ENCODE measurements at regions of chrX and their contacts with region 1.

Region 1: DNA sequence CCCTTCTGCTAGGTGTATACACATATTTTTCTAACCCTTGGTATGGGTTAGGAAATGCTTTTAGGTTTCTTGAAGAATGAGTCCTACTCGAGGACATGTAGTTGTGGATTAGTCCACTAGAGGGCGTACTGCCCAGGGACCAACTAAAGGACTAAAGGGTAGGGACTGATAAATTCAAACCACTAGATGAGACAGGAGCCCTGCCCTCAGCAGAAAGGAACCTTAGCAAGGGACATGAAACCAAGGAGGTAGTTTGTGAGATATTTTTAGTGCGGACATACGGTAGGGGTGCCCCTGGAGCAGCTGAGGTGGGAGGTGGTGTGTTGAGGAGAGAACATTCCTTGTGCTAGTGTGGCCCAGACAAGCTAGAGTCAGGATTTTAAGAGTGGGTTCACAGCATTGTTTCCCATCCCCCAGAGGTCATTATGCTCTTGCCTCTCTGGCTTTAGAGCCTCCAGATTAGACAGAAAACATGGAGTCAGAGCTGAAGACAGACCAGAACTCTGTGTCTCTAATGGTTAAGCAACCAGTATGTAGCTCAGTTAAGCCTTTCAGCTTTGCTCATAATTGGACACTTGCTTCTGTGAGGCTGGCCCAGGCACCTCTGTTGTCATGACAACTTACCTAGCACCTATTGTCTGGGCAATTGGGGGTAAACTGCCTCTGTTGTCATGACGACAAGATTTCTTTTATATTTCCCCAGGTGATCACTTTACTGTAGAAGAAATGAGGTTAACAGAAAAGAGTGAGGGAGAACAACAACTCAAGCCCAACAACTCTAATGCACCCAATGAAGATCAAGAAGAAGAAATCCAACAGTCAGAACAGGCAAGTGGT is 1.0 kb downstream of the TMEM31 start:
- DNase-seq: no peak
- H3K4me3 ChIP-seq: no peak overlapping the region
- H3K27ac ChIP-seq: no peak overlapping the region
- H3K4me1 ChIP-seq: peaks cover 0 to 4% (median 3%) of the 10 kb centered on the region in 4 donors
- H3K27me3 ChIP-seq: no peaks in the 10 kb centered on the region
- CTCF ChIP-seq: peak in 2 of 4 experiments; percentile 23 to 35
- EP300 ChIP-seq: no peak
- POLR2A ChIP-seq: no peak

Region 2: DNA sequence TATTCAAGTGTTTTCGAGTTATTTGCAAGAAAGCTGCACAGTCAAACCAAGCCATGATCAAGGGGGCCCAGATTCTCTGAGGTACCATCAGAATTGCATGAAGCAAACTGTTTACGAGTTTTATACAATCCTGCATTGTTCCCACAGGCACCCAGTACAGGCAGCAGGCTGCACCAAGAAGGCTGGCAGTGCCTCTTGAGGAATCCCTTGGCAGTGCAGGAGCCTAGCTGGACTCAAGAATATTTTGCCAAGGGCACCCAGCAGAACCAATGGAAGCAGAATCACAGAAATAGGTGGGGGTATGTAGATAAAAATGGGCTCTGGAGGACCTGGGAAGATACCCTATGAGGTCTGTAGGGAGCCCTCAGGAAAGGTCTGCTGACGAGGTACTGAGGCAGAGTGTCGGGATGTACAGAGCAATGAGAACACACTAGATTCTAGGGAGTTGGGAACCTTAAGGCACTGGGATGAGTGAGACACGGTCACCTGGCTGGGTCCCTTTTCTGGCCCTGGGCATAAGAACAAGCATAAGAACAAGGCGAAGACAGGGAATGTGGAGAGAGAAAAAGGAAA is 62.4 kb after region 1 on chrX:
- intact Hi-C with region 1: loop called (anchors 10 kb)
- DNase-seq: no peak
- H3K4me3 ChIP-seq: no peak overlapping the region
- H3K27ac ChIP-seq: no peak overlapping the region
- H3K4me1 ChIP-seq: peaks cover 0 to 5% (median 0%) of the 10 kb centered on the region in 4 donors
- H3K27me3 ChIP-seq: no peaks in the 10 kb centered on the region
- CTCF ChIP-seq: peak in 3 of 4 experiments; percentile 14 to 36 (median 25)
- EP300 ChIP-seq: no peak
- POLR2A ChIP-seq: no peak

Region 3: DNA sequence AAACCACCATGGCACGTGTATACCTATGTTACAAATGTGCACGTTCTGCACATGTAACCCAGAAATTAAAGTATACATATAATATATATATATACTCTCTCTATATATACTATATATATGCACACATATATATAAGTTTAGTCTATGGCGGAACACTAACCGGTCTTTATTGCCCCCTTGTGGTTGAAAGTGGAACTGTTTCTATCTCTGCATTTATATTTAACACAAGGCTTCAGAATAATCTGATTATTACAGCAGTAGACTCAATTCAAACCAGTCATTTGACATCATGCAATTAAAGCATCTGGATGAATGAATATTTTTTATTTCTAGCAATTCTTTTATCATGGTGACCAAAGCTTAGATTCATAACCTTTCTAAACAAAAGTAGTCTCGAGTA is 105.8 kb after region 1 on chrX:
- intact Hi-C with region 1: loop called (anchors 5 kb)
- DNase-seq: no peak
- H3K4me3 ChIP-seq: no peak overlapping the region
- H3K27ac ChIP-seq: no peak overlapping the region
- H3K4me1 ChIP-seq: no peaks in the 10 kb centered on the region
- H3K27me3 ChIP-seq: no peaks in the 10 kb centered on the region
- CTCF ChIP-seq: peak; percentile 33 to 66 (median 35)
- EP300 ChIP-seq: no peak
- POLR2A ChIP-seq: no peak